ENCODE measurements at regions of chr1 and their contacts with region 1.

Region 1: GRCh38 chr1:145823565-145824498 is at the starts of genes POLR3C and RNF115:
- DNase-seq: peak; percentile 93 to 96 (median 95)
- ATAC-seq: peak; percentile 87 to 97 (median 96)
- H3K4me3 ChIP-seq: peak within 1 kb of the TSS; percentile 64 to 97 (median 76)
- H3K27ac ChIP-seq: peak within 1 kb of the TSS; percentile 86 to 97 (median 93)
- H3K4me1 ChIP-seq: peaks cover 0 to 18% (median 13%) of the 10 kb centered on the region in 12 donors
- H3K27me3 ChIP-seq: no peaks in the 10 kb centered on the region
- CTCF ChIP-seq: no peak
- POLR2A ChIP-seq: peak; percentile 61 to 89
- total RNA-seq, gene POLR3C: 12.5 to 22.4 (median 15.1) TPM
- total RNA-seq, gene RNF115: 41.4 to 76.5 (median 52.0) TPM

Region 2: DNA sequence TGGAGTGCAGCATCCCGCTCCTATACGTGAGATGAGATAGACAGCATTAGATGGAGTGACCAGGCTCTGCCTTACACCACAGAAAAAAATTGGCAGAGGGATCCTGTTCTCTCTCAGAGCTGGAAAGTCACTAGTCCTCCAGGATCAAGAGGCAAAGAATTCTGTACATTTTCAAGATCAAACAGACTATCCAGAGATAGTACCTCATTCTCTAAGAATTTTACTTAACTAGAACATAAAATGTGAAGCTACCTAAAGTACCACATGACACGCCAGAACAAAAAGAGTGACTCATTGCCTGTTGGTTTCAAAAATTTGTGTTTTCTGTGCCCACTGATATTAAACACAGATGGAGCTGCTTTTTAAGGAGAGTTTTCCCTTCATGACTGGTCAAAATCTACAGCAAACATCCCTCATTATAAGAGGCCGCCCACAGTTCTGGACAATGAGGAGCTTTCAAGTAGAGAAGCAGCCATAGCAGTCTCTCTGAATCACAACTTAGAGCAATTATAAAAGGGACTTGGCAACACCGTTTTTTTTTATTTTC is 72.3 kb before region 1 on chr1:
- intact Hi-C with region 1: loop called in 1 of 10 experiments (anchors 10 kb)
- DNase-seq: no peak
- ATAC-seq: peak in 1 of 4 donors; percentile 28
- H3K4me3 ChIP-seq: no peak overlapping the region
- H3K27ac ChIP-seq: peak overlapping the region in 1 of 12 donors; percentile 19
- H3K4me1 ChIP-seq: peaks cover 0 to 8% (median 0%) of the 10 kb centered on the region in 12 donors
- H3K27me3 ChIP-seq: no peaks in the 10 kb centered on the region
- CTCF ChIP-seq: no peak
- POLR2A ChIP-seq: no peak